Right lobe of liver (tissue), 6 donors: ENCODE measurements at regions of chr11 and their contacts with region 1.

Region 1: DNA sequence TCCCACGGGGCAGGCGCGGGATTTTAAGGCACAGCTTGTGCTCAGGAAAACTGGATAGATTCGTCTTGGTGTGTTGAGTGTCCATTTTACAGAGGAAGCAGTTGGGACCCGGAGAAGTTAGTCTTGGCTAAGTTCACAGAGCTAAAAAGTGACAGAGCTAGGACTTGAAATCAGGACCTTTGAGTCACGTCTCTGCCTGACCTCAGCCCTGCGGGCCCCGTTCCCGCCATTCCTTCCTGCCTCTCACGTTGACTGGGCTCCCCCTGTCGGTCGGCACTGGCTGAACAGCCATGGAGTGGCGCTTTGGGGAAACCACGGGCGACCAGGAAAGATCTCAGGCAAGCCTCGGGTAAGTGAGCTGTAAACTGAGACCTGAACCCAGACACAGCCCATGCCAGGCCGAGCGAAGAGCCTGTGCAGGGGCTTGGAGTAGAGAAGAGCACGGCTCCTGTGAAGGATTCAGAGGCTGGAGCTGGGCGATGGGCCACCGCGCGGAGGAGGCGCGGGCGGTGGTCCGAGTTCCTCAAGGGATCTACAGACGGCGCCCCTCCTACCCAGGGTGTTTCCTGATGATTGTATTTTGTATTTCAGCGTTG is 54.1 kb downstream of the WNT11 start:
- DNase-seq: peak; percentile 88 to 90 (median 90)
- ATAC-seq: peak; percentile 95 to 99 (median 96)
- H3K4me3 ChIP-seq: peak overlapping the region; percentile 9 to 39 (median 26)
- H3K27ac ChIP-seq: no peak overlapping the region
- H3K4me1 ChIP-seq: peaks cover 0 to 12% (median 4%) of the 10 kb centered on the region in 4 donors
- H3K27me3 ChIP-seq: no peaks in the 10 kb centered on the region
- CTCF ChIP-seq: peak; percentile 92 to 98 (median 95)
- POLR2A ChIP-seq: no peak

Region 2: GRCh38 chr11:75896843-75897419 is 255.3 kb before region 1 on chr11:
- intact Hi-C with region 1: loop called in 1 of 2 experiments (anchors 10 kb)
- DNase-seq: no peak
- ATAC-seq: peak; percentile 62 to 77 (median 72)
- H3K4me3 ChIP-seq: no peak overlapping the region
- H3K27ac ChIP-seq: no peak overlapping the region
- H3K4me1 ChIP-seq: no peaks in the 10 kb centered on the region
- H3K27me3 ChIP-seq: no peaks in the 10 kb centered on the region
- CTCF ChIP-seq: peak; percentile 69 to 77 (median 72)
- POLR2A ChIP-seq: no peak